ENCODE measurements at regions of chr5 and their contacts with region 1.

Region 1: DNA sequence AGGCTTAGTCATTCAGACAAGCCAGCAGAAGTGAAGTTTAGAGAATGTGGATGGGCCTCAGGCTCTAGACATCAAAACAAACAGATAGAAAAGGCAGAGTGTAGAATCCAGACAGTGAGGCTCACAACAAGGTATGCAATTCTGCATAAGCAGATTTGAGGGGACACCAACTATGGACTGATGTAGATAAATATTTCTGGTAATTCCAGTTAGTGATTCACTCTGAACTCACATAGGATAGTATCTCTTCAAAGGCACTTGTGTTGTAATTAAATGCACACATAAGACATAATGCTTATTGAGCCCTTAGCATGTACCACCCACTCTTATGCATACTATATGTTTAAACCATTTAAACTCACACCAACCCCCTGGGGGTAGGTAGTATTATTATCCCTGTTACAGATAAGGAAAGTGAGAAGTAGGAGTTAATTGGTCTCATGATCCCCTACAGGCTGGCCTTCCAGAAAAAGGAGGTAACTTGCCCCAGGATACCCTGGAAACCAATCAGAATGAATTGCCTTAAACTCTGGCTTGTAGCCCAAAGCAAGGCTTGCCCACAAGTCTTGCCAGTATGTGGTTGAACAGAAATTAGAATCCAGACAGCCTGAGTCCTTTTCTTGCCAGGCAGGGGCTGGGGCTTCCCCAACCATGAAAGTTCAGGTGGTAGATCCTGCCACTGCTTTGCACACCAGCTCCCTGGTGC is 39.5 kb upstream of the HSPB3 start:
- H3K4me3 Mint-ChIP-seq: no peak overlapping the region
- H3K27ac Mint-ChIP-seq: no peak overlapping the region
- H3K4me1 Mint-ChIP-seq: no peaks in the 10 kb centered on the region
- H3K27me3 Mint-ChIP-seq: peaks cover 3% of the 10 kb centered on the region

Region 2: DNA sequence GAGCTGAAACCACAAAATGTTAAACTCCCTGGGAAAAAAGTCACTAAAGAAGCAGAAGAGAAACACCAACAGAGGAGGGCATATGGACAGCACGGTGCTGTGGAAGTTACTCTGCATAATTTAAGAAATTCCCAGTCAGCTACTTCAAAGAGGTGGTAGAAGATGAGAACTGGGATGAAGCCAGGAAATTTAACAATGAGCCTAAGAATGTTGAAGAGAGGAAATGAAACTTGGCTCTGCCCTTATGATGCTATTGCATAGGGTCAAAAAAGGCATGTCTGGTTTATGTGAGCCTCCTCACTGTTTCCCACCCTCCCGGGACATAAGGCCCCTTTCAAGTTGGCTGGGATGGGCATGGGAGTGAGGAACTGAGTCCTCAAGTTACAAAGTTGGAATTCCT is 76.1 kb after region 1 on chr5:
- intact Hi-C with region 1: loop called (anchors 2 kb)
- H3K4me3 Mint-ChIP-seq: no peak overlapping the region
- H3K27ac Mint-ChIP-seq: peak overlapping the region; percentile 28
- H3K4me1 Mint-ChIP-seq: peaks cover 13% of the 10 kb centered on the region
- H3K27me3 Mint-ChIP-seq: peaks cover 11% of the 10 kb centered on the region